Activated CD8-positive, alpha-beta T cell treated with anti-CD3 and anti-CD28 coated beads for 36 hours (primary cell): ENCODE measurements at regions of chr1 and their contacts with region 1.

Region 1: DNA sequence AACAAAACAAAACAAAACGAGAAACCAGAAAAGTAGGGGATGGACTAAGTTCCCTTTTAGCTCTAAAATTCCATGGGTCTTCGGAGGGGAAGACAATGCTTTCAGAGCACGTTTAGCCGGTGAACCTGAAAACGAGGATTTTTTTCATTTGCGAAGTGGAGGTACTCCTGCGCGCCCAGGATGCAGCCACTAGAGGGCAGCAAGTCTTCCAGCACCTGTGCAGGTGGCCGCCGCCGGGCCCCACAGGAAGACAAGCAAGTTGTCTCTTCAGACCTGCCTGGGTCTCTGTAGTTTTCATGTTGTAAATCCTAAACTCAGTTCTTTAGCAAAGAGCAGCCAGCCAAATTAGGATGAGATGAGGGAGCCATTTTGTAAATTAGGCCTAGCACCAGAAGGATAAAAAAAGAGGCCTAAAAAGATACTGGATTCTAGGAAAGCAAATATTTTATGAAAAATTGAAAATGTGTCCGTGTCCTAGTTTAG is 17.7 kb upstream of the SNX27 start:
- DNase-seq: peak; percentile 94
- ATAC-seq: peak; percentile 99
- H3K4me3 Mint-ChIP-seq: peak overlapping the region; percentile 49
- H3K27ac Mint-ChIP-seq: no peak overlapping the region
- H3K4me1 Mint-ChIP-seq: peaks cover 6% of the 10 kb centered on the region
- H3K27me3 Mint-ChIP-seq: peaks cover 7% of the 10 kb centered on the region
- CTCF ChIP-seq: peak; percentile 92

Region 2: GRCh38 chr1:151539990-151540981 is 53.9 kb before region 1 on chr1 and contains the start of gene TUFT1:
- CTCF ChIA-PET with region 1: interaction called, 10 read pairs
- POLR2A ChIA-PET with region 1: no interaction called
- intact Hi-C with region 1: no loop called
- DNase-seq: peak; percentile 97
- ATAC-seq: peak; percentile 100
- H3K4me3 Mint-ChIP-seq: peak within 1 kb of the TSS; percentile 73
- H3K27ac Mint-ChIP-seq: no peak within 1 kb of the TSS
- H3K4me1 Mint-ChIP-seq: peaks cover 15% of the 10 kb centered on the region
- H3K27me3 Mint-ChIP-seq: peaks cover 8% of the 10 kb centered on the region
- CTCF ChIP-seq: no peak
- total RNA-seq, gene TUFT1: 1.0 to 1.5 TPM

Region 3: DNA sequence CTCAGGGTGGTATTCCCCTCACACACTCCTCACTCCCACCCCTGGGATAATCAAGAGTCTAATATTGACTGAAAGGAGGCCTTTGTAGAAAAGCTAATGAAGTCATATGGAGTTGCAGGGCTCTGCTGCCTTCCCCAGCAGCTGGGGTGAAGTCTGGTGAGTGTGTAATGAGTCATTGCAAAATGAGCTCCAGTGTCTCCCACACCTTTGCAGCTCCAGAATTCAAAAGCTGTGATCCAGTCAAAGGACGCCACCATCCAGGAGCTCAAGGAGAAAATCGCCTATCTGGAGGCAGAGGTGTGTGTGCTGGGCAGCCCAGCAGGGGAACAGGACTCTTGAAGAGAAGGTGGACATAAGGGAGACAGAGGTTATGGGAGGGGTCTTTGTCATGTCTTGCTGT is 14.7 kb before region 1 on chr1:
- CTCF ChIA-PET with region 1: interaction called, 17 read pairs
- POLR2A ChIA-PET with region 1: no interaction called
- intact Hi-C with region 1: no loop called
- DNase-seq: no peak
- ATAC-seq: no peak
- H3K4me3 Mint-ChIP-seq: no peak overlapping the region
- H3K27ac Mint-ChIP-seq: no peak overlapping the region
- H3K4me1 Mint-ChIP-seq: peaks cover 8% of the 10 kb centered on the region
- H3K27me3 Mint-ChIP-seq: no peaks in the 10 kb centered on the region
- CTCF ChIP-seq: no peak

Region 4: DNA sequence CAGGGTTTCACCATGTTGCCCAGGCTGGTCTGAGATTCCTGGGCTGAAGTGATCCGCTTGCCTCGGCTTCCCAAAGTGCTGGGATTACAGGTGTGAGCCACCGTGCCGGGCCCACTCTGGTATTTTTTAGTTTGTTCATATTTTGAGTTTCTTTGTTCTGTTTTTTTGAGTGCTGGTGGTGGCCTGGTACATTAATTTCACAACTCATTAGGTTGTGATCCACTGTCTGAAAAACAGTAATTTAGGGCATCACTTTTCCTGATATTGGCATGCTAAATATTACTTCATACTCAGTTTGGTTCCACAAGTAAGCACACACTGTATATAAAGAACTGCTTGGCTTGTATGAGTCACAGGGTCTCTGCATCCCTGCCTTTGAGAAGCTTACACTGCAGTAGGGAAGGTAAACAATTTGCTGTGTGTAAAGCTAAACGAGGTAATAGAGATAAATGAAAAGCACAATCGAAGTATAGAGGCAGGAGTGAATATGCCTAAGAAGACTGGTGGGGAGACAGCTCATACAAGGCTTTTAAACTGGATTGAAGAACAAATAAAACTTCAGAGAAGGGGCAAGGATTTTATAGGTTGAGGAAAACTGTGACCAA is 25.4 kb after region 1 on chr1:
- CTCF ChIA-PET with region 1: interaction called, 33 read pairs
- POLR2A ChIA-PET with region 1: no interaction called
- intact Hi-C with region 1: no loop called
- DNase-seq: no peak
- ATAC-seq: no peak
- H3K4me3 Mint-ChIP-seq: no peak overlapping the region
- H3K27ac Mint-ChIP-seq: no peak overlapping the region
- H3K4me1 Mint-ChIP-seq: peaks cover 50% of the 10 kb centered on the region
- H3K27me3 Mint-ChIP-seq: no peaks in the 10 kb centered on the region
- CTCF ChIP-seq: no peak

Region 5: GRCh38 chr1:151739590-151740375 is 145.6 kb after region 1 on chr1:
- CTCF ChIA-PET with region 1: interaction called, 34 read pairs
- POLR2A ChIA-PET with region 1: no interaction called
- intact Hi-C with region 1: loop called (anchors 5 kb)
- DNase-seq: no peak
- ATAC-seq: no peak
- H3K4me3 Mint-ChIP-seq: no peak overlapping the region
- H3K27ac Mint-ChIP-seq: no peak overlapping the region
- H3K4me1 Mint-ChIP-seq: peaks cover 4% of the 10 kb centered on the region
- H3K27me3 Mint-ChIP-seq: peaks cover 2% of the 10 kb centered on the region
- CTCF ChIP-seq: no peak